Activated CD4-positive, alpha-beta T cell treated with anti-CD3 and anti-CD28 coated beads for 36 hours (primary cell): ENCODE measurements at regions of chr10 and their contacts with region 1.

Region 1: DNA sequence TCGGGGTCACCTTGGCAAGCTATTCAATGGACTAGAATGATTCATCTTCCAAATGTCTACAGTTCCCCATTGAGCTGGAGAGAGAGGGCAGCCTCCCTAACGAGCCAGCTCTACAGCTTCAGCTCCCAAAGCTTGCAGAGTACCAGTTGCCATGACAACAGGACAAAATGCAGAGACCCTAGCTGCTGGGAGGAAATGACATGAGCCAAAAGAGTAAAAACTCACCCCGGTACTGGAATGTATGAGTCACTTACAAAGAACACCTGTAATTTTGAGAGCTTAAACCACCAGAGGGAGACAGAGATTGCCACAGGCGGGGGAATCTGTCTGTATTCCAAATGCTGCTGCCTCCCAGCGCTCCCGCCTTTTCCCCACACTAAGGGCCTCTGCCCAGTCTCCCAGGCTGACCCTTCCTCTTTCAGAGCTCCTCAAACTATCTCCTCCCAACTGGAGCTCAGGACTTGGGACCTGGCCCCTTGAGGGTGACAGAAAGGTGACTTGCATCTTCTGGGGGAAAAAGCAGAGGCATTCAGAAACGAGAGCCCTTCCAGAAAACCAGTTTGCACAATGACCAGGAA is 95.5 kb downstream of the CUL2 start:
- DNase-seq: peak; percentile 71
- ATAC-seq: peak; percentile 95
- H3K4me3 Mint-ChIP-seq: no peak overlapping the region
- H3K27ac Mint-ChIP-seq: peak overlapping the region; percentile 47
- H3K4me1 Mint-ChIP-seq: peaks cover 16% of the 10 kb centered on the region
- H3K27me3 Mint-ChIP-seq: no peaks in the 10 kb centered on the region

Region 2: DNA sequence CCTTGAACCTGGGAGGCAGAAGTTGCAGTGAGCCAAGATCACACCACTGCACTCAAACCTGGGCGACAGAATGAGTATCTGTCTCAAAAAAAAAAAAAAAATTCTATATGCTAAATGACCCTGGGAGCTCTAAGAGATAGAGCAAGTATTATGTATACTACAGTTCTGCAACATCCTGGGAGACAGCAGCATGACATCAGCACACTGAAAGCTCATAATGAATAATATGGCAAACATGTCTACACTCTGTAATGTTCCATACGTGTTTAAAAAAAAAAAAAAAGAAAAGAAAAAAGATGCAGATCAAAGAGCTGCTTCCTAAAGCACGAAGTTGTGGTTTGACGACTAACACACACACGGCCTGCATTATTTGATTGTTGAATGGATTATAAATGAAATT is 23.0 kb after region 1 on chr10:
- CTCF ChIA-PET with region 1: interaction called, 12 read pairs
- POLR2A ChIA-PET with region 1: no interaction called
- intact Hi-C with region 1: no loop called
- DNase-seq: peak; percentile 34
- ATAC-seq: peak; percentile 91
- H3K4me3 Mint-ChIP-seq: no peak overlapping the region
- H3K27ac Mint-ChIP-seq: no peak overlapping the region
- H3K4me1 Mint-ChIP-seq: peaks cover 22% of the 10 kb centered on the region
- H3K27me3 Mint-ChIP-seq: no peaks in the 10 kb centered on the region

Region 3: DNA sequence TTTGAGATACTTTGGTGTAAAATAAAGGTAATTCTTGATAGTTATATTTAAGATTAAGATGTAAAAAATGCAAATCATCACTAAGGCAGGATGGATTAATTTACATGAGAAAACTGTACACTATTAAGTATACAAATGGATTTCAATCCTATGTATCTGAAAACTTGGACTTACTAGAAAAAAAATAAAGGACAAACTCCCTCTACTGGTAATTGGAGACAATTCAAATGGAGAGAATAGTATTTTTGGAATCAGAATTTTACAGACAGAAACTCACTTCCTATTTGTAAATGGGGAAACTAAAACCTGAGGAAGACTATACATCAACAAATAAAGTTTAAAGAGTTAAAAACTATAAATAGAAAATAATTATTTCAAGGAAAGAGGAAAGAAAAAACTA is 32.9 kb after region 1 on chr10:
- CTCF ChIA-PET with region 1: interaction called, 25 read pairs
- POLR2A ChIA-PET with region 1: no interaction called
- intact Hi-C with region 1: no loop called
- DNase-seq: no peak
- ATAC-seq: no peak
- H3K4me3 Mint-ChIP-seq: no peak overlapping the region
- H3K27ac Mint-ChIP-seq: no peak overlapping the region
- H3K4me1 Mint-ChIP-seq: no peaks in the 10 kb centered on the region
- H3K27me3 Mint-ChIP-seq: no peaks in the 10 kb centered on the region

Region 4: GRCh38 chr10:35090162-35090954 is 95.7 kb after region 1 on chr10 and contains the start of gene CUL2:
- CTCF ChIA-PET with region 1: interaction called, 4 read pairs
- POLR2A ChIA-PET with region 1: interaction called, 5 read pairs
- intact Hi-C with region 1: loop called in 1 of 2 experiments (anchors 1 kb)
- DNase-seq: peak; percentile 94
- ATAC-seq: peak; percentile 96
- H3K4me3 Mint-ChIP-seq: peak within 1 kb of the TSS; percentile 93
- H3K27ac Mint-ChIP-seq: peak within 1 kb of the TSS; percentile 96
- H3K4me1 Mint-ChIP-seq: peaks cover 45% of the 10 kb centered on the region
- H3K27me3 Mint-ChIP-seq: no peaks in the 10 kb centered on the region
- total RNA-seq, gene CUL2: 42.7 to 45.3 TPM